Activated CD8-positive, alpha-beta T cell treated with anti-CD3 and anti-CD28 coated beads for 36 hours (primary cell): ENCODE measurements at regions of chr9 and their contacts with region 1.

Region 1: GRCh38 chr9:94681508-94681907 is 42.2 kb upstream of the FBP1 start:
- DNase-seq: peak; percentile 65
- ATAC-seq: peak; percentile 80
- H3K4me3 Mint-ChIP-seq: no peak overlapping the region
- H3K27ac Mint-ChIP-seq: no peak overlapping the region
- H3K4me1 Mint-ChIP-seq: no peaks in the 10 kb centered on the region
- H3K27me3 Mint-ChIP-seq: peaks cover 18% of the 10 kb centered on the region
- CTCF ChIP-seq: peak; percentile 76

Region 2: GRCh38 chr9:93843396-93843795 is 838.1 kb before region 1 on chr9:
- CTCF ChIA-PET with region 1: no interaction called
- POLR2A ChIA-PET with region 1: no interaction called
- intact Hi-C with region 1: no loop called
- DNase-seq: no peak
- ATAC-seq: no peak
- H3K4me3 Mint-ChIP-seq: no peak overlapping the region
- H3K27ac Mint-ChIP-seq: no peak overlapping the region
- H3K4me1 Mint-ChIP-seq: no peaks in the 10 kb centered on the region
- H3K27me3 Mint-ChIP-seq: peaks cover 30% of the 10 kb centered on the region
- CTCF ChIP-seq: no peak

Region 3: GRCh38 chr9:94656200-94656599 is 25.3 kb before region 1 on chr9:
- CTCF ChIA-PET with region 1: interaction called, 16 read pairs
- POLR2A ChIA-PET with region 1: no interaction called
- intact Hi-C with region 1: no loop called
- DNase-seq: peak; percentile 76
- ATAC-seq: peak; percentile 99
- H3K4me3 Mint-ChIP-seq: peak overlapping the region; percentile 69
- H3K27ac Mint-ChIP-seq: peak overlapping the region; percentile 76
- H3K4me1 Mint-ChIP-seq: peaks cover 18% of the 10 kb centered on the region
- H3K27me3 Mint-ChIP-seq: no peaks in the 10 kb centered on the region
- CTCF ChIP-seq: no peak

Region 4: GRCh38 chr9:94668418-94668932 is 13.0 kb before region 1 on chr9:
- CTCF ChIA-PET with region 1: interaction called, 48 read pairs
- POLR2A ChIA-PET with region 1: interaction called, 3 read pairs
- intact Hi-C with region 1: no loop called
- DNase-seq: no peak
- ATAC-seq: no peak
- H3K4me3 Mint-ChIP-seq: no peak overlapping the region
- H3K27ac Mint-ChIP-seq: no peak overlapping the region
- H3K4me1 Mint-ChIP-seq: peaks cover 5% of the 10 kb centered on the region
- H3K27me3 Mint-ChIP-seq: peaks cover 2% of the 10 kb centered on the region
- CTCF ChIP-seq: no peak

Region 5: GRCh38 chr9:94783102-94783664 is 101.7 kb after region 1 on chr9:
- CTCF ChIA-PET with region 1: interaction called, 14 read pairs
- POLR2A ChIA-PET with region 1: no interaction called
- intact Hi-C with region 1: no loop called
- DNase-seq: peak; percentile 57
- ATAC-seq: peak; percentile 30
- H3K4me3 Mint-ChIP-seq: no peak overlapping the region
- H3K27ac Mint-ChIP-seq: no peak overlapping the region
- H3K4me1 Mint-ChIP-seq: peaks cover 11% of the 10 kb centered on the region
- H3K27me3 Mint-ChIP-seq: no peaks in the 10 kb centered on the region
- CTCF ChIP-seq: peak; percentile 67

Region 6: GRCh38 chr9:95167998-95168397 is 486.5 kb after region 1 on chr9:
- CTCF ChIA-PET with region 1: interaction called, 24 read pairs
- POLR2A ChIA-PET with region 1: no interaction called
- intact Hi-C with region 1: no loop called
- DNase-seq: peak; percentile 77
- ATAC-seq: peak; percentile 83
- H3K4me3 Mint-ChIP-seq: no peak overlapping the region
- H3K27ac Mint-ChIP-seq: no peak overlapping the region
- H3K4me1 Mint-ChIP-seq: peaks cover 18% of the 10 kb centered on the region
- H3K27me3 Mint-ChIP-seq: no peaks in the 10 kb centered on the region
- CTCF ChIP-seq: peak; percentile 85